Cardiac septum (tissue), 1 donor: ENCODE measurements at regions of chr5 and their contacts with region 1.

Region 1: DNA sequence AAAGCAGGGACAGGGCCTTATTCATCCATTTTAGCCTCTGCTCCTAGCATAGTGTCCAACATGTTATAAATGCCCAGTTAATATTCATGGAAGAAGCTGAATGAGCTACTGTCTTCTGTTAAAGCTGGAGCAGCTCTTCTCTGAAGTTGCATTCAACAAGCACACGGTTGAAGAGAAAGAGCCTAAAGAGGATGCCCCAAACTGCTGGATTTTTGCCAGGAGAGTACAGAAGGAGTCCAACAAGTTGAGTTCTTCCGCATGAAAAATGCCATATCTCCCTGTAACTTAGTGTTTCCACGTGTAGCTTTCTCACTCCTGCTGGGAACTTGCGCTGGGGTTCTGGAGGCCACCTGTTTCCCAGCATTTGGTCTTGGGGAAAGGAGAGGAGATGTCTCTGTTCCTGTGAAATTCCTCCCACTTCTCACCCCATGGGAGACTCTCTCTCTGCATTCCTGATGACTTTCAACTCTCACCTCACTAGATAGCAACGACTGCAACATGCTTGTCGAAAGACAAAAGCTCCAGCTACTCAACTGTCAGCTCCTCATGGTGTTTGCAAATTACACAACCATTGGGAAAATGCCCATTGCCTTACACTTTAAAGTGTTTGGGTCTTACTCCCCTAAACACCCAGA is 122.8 kb downstream of the KIF4B start:
- DNase-seq: no peak

Region 2: GRCh38 chr5:154972476-154973080 is 163.8 kb before region 1 on chr5:
- intact Hi-C with region 1: loop called (anchors 5 kb)
- DNase-seq: no peak